Heart right ventricle (tissue), 16 donors: ENCODE measurements at regions of chr5 and their contacts with region 1.

Region 1: GRCh38 chr5:96614110-96614691 is 48.0 kb upstream of the CAST start:
- DNase-seq: peak in 1 of 2 donors; percentile 82
- ATAC-seq: peak; percentile 74 to 94 (median 87)
- H3K4me3 ChIP-seq: peak overlapping the region in 3 of 10 donors; percentile 25 to 29 (median 28)
- H3K27ac ChIP-seq: peak overlapping the region; percentile 18 to 76 (median 62)
- H3K4me1 ChIP-seq: peaks cover 0 to 23% (median 19%) of the 10 kb centered on the region in 9 donors
- H3K27me3 ChIP-seq: no peaks in the 10 kb centered on the region
- CTCF ChIP-seq: peak in 8 of 9 donors; percentile 41 to 74 (median 65)

Region 2: DNA sequence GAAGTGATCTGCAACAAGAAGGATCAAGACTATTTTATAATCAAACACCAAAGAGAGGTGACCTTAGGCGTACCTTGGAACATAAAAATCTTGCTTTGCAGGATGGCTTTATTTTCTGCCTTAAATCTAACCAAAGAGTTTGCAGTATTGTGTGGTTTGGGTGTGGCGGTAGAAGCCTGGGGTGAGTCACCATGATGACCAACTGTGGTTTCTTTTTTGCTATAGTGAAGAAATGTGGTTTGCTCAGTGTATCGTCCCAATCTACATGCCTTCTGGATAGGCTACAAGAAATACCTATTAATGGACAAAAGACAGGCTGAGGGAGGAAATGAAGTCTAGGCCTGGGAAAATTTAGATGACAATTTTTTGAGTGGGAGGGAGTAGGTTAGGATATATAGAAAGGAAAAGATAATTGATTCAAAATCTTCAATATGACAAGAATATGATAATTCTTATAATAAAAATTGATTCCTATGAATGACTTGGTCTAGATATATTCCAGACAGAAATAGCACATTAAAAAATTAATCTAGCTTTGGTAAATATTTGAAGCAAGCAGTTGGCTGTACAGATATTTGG is 43.0 kb after region 1 on chr5:
- intact Hi-C with region 1: loop called in 4 of 10 experiments (anchors 2 to 10 kb)
- DNase-seq: no peak
- ATAC-seq: peak in 1 of 8 donors; percentile 23
- H3K4me3 ChIP-seq: no peak overlapping the region
- H3K27ac ChIP-seq: no peak overlapping the region
- H3K4me1 ChIP-seq: peaks cover 0 to 46% (median 6%) of the 10 kb centered on the region in 9 donors
- H3K27me3 ChIP-seq: no peaks in the 10 kb centered on the region
- CTCF ChIP-seq: no peak

Region 3: DNA sequence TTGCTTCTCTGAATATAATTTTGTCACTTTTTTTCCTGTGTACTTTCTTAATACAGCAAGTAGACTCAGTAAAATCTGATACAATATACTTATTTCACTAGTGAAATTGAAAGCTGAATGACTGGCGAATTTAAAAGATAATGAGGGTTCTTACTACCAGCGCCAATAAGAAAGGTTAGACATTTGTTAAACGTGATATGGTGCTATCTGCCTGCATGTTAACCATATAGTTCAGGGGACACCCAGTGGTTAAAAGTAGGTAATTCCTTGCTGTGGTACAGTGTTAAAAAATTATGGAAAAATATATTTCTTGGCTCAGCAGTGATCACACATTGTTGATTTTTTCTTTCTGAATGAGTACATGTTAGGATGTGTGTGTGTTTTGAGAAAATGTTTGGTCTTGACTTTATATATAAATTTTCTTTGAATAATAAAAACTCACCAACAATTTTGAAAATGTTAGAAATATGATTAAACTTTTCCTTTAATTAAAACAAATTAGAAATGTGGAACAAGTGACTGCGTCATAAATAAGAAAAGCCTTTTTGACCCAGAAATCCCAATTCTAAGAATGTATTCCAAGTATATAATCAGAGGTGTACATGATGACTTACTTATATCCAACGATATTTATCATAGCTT is 73.7 kb after region 1 on chr5:
- intact Hi-C with region 1: loop called in 8 of 10 experiments (anchors 5 to 10 kb)
- DNase-seq: no peak
- ATAC-seq: peak in 7 of 8 donors; percentile 67 to 88 (median 76)
- H3K4me3 ChIP-seq: peak overlapping the region in 2 of 10 donors; percentile 4 to 13
- H3K27ac ChIP-seq: no peak overlapping the region
- H3K4me1 ChIP-seq: peaks cover 0 to 17% (median 12%) of the 10 kb centered on the region in 9 donors
- H3K27me3 ChIP-seq: no peaks in the 10 kb centered on the region
- CTCF ChIP-seq: peak; percentile 12 to 68 (median 54)

Region 4: DNA sequence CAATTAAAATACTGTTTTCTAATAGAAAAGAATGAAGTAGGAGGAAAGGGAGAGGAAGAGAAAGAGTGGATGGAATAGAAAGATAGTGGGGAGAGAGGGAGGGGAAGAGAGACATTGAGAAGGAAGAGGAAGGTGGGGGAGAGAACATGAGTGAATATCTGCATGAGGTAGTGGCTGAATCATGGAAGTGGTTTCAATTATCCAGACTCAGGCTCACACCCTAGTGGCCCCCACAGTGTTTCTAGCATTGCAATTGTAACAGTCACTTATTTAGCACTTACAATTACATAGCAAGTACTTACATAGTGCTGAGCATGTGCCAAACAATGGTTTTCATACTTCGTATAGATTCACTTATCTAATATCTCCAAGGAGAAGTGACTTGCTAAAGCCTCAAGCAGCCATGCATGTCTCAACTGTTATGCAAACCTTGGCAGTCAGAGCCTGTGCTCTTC is 120.7 kb after region 1 on chr5:
- intact Hi-C with region 1: loop called in 3 of 10 experiments (anchors 5 to 10 kb)
- DNase-seq: no peak
- ATAC-seq: peak in 5 of 8 donors; percentile 11 to 51 (median 33)
- H3K4me3 ChIP-seq: no peak overlapping the region
- H3K27ac ChIP-seq: peak overlapping the region in 2 of 10 donors; percentile 8 to 12
- H3K4me1 ChIP-seq: peaks cover 0 to 32% (median 13%) of the 10 kb centered on the region in 9 donors
- H3K27me3 ChIP-seq: no peaks in the 10 kb centered on the region
- CTCF ChIP-seq: no peak

Region 5: GRCh38 chr5:96752341-96753016 is 138.3 kb after region 1 on chr5:
- intact Hi-C with region 1: loop called in 3 of 10 experiments (anchors 5 to 10 kb)
- DNase-seq: peak in 1 of 2 donors; percentile 61
- ATAC-seq: no peak
- H3K4me3 ChIP-seq: no peak overlapping the region
- H3K27ac ChIP-seq: peak overlapping the region in 6 of 10 donors; percentile 30 to 70 (median 48)
- H3K4me1 ChIP-seq: peaks cover 0 to 39% (median 9%) of the 10 kb centered on the region in 9 donors
- H3K27me3 ChIP-seq: no peaks in the 10 kb centered on the region
- CTCF ChIP-seq: peak; percentile 59 to 86 (median 73)

Region 6: GRCh38 chr5:97149709-97150108 is 535.5 kb after region 1 on chr5:
- intact Hi-C with region 1: loop called in 2 of 10 experiments (anchors 10 kb)
- DNase-seq: no peak
- ATAC-seq: no peak
- H3K4me3 ChIP-seq: no peak overlapping the region
- H3K27ac ChIP-seq: no peak overlapping the region
- H3K4me1 ChIP-seq: no peaks in the 10 kb centered on the region
- H3K27me3 ChIP-seq: no peaks in the 10 kb centered on the region
- CTCF ChIP-seq: no peak